CD8-positive, alpha-beta T cell (primary cell): ENCODE measurements at regions of chr1 and their contacts with region 1.

Region 1: DNA sequence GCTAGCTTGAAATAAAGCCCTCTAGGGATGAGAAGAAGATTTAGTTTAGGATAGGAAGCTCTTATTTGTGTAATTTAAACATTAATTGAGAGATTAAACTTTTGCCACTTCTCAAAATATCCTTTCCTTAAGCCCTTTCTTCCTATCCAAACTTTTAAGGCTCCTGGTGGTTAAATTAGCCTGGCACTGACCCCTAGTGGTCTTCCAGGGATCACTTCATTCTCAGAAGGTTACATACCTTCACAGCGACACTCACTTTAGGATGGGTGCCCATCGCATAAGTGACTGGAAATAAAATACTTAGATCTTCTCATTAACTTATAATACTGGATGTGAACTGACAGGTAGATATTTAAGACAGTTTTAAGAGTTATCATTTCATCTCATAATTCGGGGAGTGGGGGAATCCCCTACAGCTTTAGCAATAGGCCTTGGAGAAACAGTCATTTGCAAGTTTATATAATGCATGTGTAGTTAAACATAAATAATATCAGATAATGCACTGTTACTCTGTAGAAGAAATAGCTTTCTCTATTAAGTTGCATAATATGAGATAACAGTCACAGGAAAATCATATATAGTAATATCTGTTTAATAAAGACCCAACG is 7.4 kb downstream of the LHX9 start:
- DNase-seq: peak in 3 of 9 experiments; percentile 40 to 72 (median 63)
- ATAC-seq: peak; percentile 64
- H3K4me3 ChIP-seq: no peak overlapping the region
- H3K4me3 Mint-ChIP-seq: no peak overlapping the region
- H3K27ac ChIP-seq: no peak overlapping the region
- H3K27ac Mint-ChIP-seq: no peak overlapping the region
- H3K4me1 ChIP-seq: peaks cover 11% of the 10 kb centered on the region
- H3K4me1 Mint-ChIP-seq: peaks cover 20% of the 10 kb centered on the region
- H3K27me3 ChIP-seq: peaks cover 30 to 37% of the 10 kb centered on the region in 2 experiments
- H3K27me3 Mint-ChIP-seq: peaks cover 63% of the 10 kb centered on the region
- CTCF ChIP-seq: peak; percentile 75

Region 2: GRCh38 chr1:197327776-197328364 is 596.8 kb before region 1 on chr1:
- CTCF ChIA-PET with region 1: no interaction called
- POLR2A ChIA-PET with region 1: no interaction called
- intact Hi-C with region 1: loop called in 1 of 2 experiments (anchors 5 kb)
- DNase-seq: peak in 2 of 9 experiments; percentile 2 to 10
- ATAC-seq: no peak
- H3K4me3 ChIP-seq: no peak overlapping the region
- H3K4me3 Mint-ChIP-seq: no peak overlapping the region
- H3K27ac ChIP-seq: no peak overlapping the region
- H3K27ac Mint-ChIP-seq: no peak overlapping the region
- H3K4me1 ChIP-seq: no peaks in the 10 kb centered on the region
- H3K4me1 Mint-ChIP-seq: no peaks in the 10 kb centered on the region
- H3K27me3 ChIP-seq: no peaks in the 10 kb centered on the region
- H3K27me3 Mint-ChIP-seq: no peaks in the 10 kb centered on the region
- CTCF ChIP-seq: peak; percentile 64

Region 3: GRCh38 chr1:197614916-197615692 is 309.5 kb before region 1 on chr1:
- CTCF ChIA-PET with region 1: interaction called, 10 read pairs
- POLR2A ChIA-PET with region 1: no interaction called
- intact Hi-C with region 1: loop called (anchors 1 to 2 kb)
- DNase-seq: peak in 4 of 9 experiments; percentile 7 to 49 (median 28)
- ATAC-seq: peak; percentile 46
- H3K4me3 ChIP-seq: no peak overlapping the region
- H3K4me3 Mint-ChIP-seq: no peak overlapping the region
- H3K27ac ChIP-seq: no peak overlapping the region
- H3K27ac Mint-ChIP-seq: no peak overlapping the region
- H3K4me1 ChIP-seq: no peaks in the 10 kb centered on the region
- H3K4me1 Mint-ChIP-seq: no peaks in the 10 kb centered on the region
- H3K27me3 ChIP-seq: no peaks in the 10 kb centered on the region
- H3K27me3 Mint-ChIP-seq: no peaks in the 10 kb centered on the region
- CTCF ChIP-seq: peak; percentile 49

Region 4: DNA sequence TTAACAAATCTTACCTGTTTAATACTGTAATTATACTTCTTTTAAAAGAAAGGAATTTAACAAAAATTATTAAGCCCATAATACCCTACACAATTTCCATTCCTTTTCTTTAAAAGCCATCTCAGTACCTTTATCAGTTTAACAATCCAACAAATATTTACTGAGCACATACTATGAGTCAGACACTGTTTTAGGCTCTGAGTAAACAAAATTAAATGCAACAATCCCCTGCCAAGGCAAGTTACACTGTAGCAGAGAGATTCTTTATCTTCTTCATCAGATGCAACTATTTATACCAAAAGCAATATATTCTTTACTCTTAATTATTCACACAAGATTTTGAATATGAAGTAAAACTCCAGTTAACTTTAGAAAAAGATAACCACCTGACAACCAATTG is 161.3 kb before region 1 on chr1:
- CTCF ChIA-PET with region 1: no interaction called
- POLR2A ChIA-PET with region 1: no interaction called
- intact Hi-C with region 1: no loop called
- DNase-seq: no peak
- ATAC-seq: no peak
- H3K4me3 ChIP-seq: no peak overlapping the region
- H3K4me3 Mint-ChIP-seq: no peak overlapping the region
- H3K27ac ChIP-seq: no peak overlapping the region
- H3K27ac Mint-ChIP-seq: no peak overlapping the region
- H3K4me1 ChIP-seq: no peaks in the 10 kb centered on the region
- H3K4me1 Mint-ChIP-seq: peaks cover 49% of the 10 kb centered on the region
- H3K27me3 ChIP-seq: no peaks in the 10 kb centered on the region
- H3K27me3 Mint-ChIP-seq: no peaks in the 10 kb centered on the region
- CTCF ChIP-seq: no peak

Region 5: GRCh38 chr1:197807216-197807615 is 117.4 kb before region 1 on chr1:
- CTCF ChIA-PET with region 1: no interaction called
- POLR2A ChIA-PET with region 1: no interaction called
- intact Hi-C with region 1: no loop called
- DNase-seq: peak in 2 of 9 experiments; percentile 16 to 35
- ATAC-seq: no peak
- H3K4me3 ChIP-seq: no peak overlapping the region
- H3K4me3 Mint-ChIP-seq: no peak overlapping the region
- H3K27ac ChIP-seq: no peak overlapping the region
- H3K27ac Mint-ChIP-seq: no peak overlapping the region
- H3K4me1 ChIP-seq: no peaks in the 10 kb centered on the region
- H3K4me1 Mint-ChIP-seq: peaks cover 8% of the 10 kb centered on the region
- H3K27me3 ChIP-seq: no peaks in the 10 kb centered on the region
- H3K27me3 Mint-ChIP-seq: no peaks in the 10 kb centered on the region
- CTCF ChIP-seq: no peak

Region 6: DNA sequence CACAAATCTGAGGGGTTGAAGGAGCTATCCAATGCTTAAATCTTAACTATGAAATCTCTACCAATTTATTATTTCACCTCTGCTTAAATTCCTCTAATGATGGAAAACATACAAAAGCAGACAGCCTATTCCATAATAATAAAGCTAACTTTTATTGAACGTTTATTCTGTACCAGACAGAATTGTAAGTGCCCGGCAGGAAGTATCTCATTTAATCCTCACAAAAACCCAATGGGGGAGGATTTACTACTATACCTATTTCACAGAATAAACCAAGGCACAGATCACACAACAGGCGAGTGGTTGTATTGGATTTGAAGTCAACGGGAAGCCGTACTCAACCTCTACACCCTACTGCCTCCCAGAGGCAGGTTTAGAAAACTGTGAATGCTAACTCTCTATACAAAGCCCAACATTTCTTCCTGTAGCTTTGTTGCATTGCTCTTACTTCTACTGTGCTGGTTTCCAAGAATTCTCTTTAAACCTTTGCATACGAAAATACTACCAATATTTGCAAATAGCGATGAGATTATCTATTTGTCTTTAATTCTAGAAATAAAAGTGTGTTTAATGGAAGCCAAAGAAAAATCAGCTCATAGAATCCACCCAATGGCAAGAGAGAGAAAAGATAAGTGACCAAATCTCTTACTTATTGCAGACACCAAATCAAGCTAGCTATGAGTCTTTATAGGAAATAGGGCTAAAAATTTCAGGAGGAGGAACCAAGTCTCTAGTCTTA is 55.7 kb before region 1 on chr1:
- CTCF ChIA-PET with region 1: interaction called, 4 read pairs
- POLR2A ChIA-PET with region 1: no interaction called
- intact Hi-C with region 1: loop called in 1 of 2 experiments (anchors 1 kb)
- DNase-seq: peak in 6 of 9 experiments; percentile 2 to 66 (median 30)
- ATAC-seq: peak; percentile 91
- H3K4me3 ChIP-seq: no peak overlapping the region
- H3K4me3 Mint-ChIP-seq: no peak overlapping the region
- H3K27ac ChIP-seq: no peak overlapping the region
- H3K27ac Mint-ChIP-seq: no peak overlapping the region
- H3K4me1 ChIP-seq: no peaks in the 10 kb centered on the region
- H3K4me1 Mint-ChIP-seq: no peaks in the 10 kb centered on the region
- H3K27me3 ChIP-seq: no peaks in the 10 kb centered on the region
- H3K27me3 Mint-ChIP-seq: peaks cover 6% of the 10 kb centered on the region
- CTCF ChIP-seq: peak; percentile 79

Region 7: GRCh38 chr1:198699167-198700015 is 774.8 kb after region 1 on chr1:
- CTCF ChIA-PET with region 1: no interaction called
- POLR2A ChIA-PET with region 1: no interaction called
- intact Hi-C with region 1: loop called in 1 of 2 experiments (anchors 5 kb)
- DNase-seq: peak; percentile 45 to 82 (median 73)
- ATAC-seq: peak; percentile 86
- H3K4me3 ChIP-seq: no peak overlapping the region
- H3K4me3 Mint-ChIP-seq: peak overlapping the region; percentile 8
- H3K27ac ChIP-seq: no peak overlapping the region
- H3K27ac Mint-ChIP-seq: peak overlapping the region; percentile 72
- H3K4me1 ChIP-seq: peaks cover 71% of the 10 kb centered on the region
- H3K4me1 Mint-ChIP-seq: peaks cover 83% of the 10 kb centered on the region
- H3K27me3 ChIP-seq: no peaks in the 10 kb centered on the region
- H3K27me3 Mint-ChIP-seq: no peaks in the 10 kb centered on the region
- CTCF ChIP-seq: peak; percentile 52